OCI-LY7 (cell line): ENCODE measurements at regions of chr12 and their contacts with region 1.

Region 1: GRCh38 chr12:53352331-53353256 is 16.4 kb upstream of the SP7 start:
- DNase-seq: peak; percentile 88
- H3K4me3 ChIP-seq: no peak overlapping the region
- H3K27ac ChIP-seq: no peak overlapping the region
- H3K4me1 ChIP-seq: no peaks in the 10 kb centered on the region
- CTCF ChIP-seq: peak; percentile 93

Region 2: DNA sequence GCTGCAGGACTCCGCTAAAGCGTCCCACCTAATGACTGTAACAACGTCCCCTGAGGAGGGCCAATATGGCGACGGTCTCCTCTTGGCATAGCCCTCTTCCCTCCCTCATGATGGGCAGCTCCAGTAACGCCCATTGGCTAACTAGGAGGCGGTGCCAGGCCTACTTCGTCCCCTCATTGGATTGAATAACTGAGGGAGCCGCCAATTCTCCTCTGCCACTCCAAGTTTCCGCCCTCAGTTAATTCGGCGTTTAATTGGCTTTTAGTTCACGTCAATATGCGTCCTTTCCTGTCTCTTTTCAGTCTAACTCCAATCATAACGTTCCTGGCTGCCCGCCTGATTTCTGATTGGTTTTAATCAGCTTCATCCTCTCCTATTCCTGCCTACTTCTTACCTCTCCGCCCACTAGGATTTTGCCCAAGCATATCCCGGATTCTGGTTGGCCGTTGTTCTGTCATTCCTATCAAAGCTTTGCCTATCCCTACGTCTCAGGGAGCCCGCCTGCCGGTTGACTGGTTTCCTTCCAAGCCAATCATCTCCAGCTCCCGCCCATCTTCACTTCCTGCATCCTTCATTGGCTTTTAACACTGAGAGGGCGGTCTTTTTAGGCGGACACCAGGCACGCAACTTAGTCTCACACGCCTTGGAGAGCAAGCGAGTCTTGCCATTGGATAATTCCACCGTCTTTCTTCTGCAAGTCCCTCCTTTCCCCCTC is 27.0 kb after region 1 on chr12:
- CTCF ChIA-PET with region 1: interaction called, 7 read pairs
- POLR2A ChIA-PET with region 1: interaction called, 9 read pairs
- intact Hi-C with region 1: loop called (anchors 1 kb)
- DNase-seq: peak; percentile 100
- H3K4me3 ChIP-seq: peak overlapping the region; percentile 86
- H3K27ac ChIP-seq: peak overlapping the region; percentile 77
- H3K4me1 ChIP-seq: peaks cover 45% of the 10 kb centered on the region
- CTCF ChIP-seq: no peak

Region 3: DNA sequence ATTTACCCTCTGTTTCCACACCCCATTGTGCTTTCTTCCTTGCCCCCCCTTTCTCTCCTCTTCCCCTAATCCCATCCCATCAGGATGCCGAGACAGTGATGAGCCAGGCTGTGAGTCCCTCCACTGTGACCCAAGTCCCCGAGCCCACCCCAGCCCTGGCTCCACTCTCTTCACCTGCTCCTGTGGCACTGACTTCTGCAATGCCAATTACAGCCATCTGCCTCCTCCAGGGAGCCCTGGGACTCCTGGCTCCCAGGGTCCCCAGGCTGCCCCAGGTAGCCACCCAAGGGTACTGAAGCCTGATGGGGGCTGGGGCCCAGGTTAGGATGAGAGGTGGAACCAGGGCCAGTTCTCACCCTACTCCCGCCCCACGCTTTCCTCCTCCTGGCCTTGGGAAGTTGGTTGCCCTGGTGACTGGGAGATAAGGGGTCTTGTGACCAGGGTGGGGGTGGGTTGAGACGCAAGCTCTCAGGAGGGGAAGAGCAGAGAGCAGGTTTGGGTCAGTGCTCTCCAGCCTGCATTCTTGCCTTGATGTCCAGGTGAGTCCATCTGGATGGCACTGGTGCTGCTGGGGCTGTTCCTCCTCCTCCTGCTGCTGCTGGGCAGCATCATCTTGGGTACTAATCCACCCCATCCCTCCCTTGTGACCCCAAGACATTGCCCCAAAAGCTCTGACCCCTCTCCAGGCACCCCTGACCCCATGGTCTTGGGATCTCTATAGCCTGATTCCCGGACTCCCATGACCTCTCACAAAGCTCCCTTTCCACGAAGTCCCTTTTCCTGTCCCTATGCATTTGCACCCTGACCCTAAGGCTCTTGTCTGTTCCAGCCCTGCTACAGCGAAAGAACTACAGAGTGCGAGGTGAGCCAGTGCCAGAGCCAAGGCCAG is 72.3 kb after region 1 on chr12:
- CTCF ChIA-PET with region 1: interaction called, 11 read pairs
- POLR2A ChIA-PET with region 1: interaction called, 7 read pairs
- intact Hi-C with region 1: loop called (anchors 1 kb)
- DNase-seq: no peak
- H3K4me3 ChIP-seq: no peak overlapping the region
- H3K27ac ChIP-seq: no peak overlapping the region
- H3K4me1 ChIP-seq: peaks cover 4% of the 10 kb centered on the region
- CTCF ChIP-seq: no peak

Region 4: GRCh38 chr12:53465679-53466078 is 113.1 kb after region 1 on chr12:
- CTCF ChIA-PET with region 1: no interaction called
- POLR2A ChIA-PET with region 1: no interaction called
- intact Hi-C with region 1: no loop called
- DNase-seq: no peak
- H3K4me3 ChIP-seq: no peak overlapping the region
- H3K27ac ChIP-seq: no peak overlapping the region
- H3K4me1 ChIP-seq: peaks cover 24% of the 10 kb centered on the region
- CTCF ChIP-seq: 0 out of 2 replicates have a peak, but pooled peaks have one; percentile 24

Region 5: DNA sequence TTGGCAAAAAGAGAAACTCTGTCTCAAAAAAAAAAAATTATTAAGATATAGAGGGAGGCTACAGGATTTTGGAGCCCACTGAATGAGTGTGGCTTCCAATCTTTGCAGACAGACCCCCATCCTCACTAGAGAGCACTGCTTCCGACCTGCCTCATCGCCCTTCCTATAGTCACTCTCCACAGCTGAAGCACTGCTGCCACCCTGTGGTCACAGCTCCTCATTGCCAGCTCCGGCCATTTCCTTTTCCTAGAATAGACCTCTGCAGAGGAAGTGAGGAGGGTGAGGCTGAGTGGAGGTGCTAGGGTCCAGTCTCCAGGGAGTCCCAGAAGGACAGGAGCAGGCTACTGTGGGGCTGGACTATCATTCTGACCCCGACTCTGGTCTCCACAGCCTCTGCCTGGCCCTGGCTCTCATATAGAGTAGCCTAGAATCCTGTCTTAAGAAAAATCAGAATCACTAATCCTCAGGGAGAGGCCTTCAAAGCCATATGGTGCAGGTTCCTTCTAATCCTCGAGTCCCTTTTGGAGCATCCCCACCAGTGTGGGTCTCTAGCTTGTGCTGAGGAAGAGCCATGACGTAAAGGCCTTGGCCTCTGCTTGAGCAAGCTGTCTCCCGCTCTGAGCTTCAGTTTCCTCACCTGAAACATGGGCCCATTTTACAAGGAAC is 156.1 kb after region 1 on chr12:
- CTCF ChIA-PET with region 1: interaction called, 7 read pairs
- POLR2A ChIA-PET with region 1: no interaction called
- intact Hi-C with region 1: loop called (anchors 1 kb)
- DNase-seq: peak; percentile 88
- H3K4me3 ChIP-seq: no peak overlapping the region
- H3K27ac ChIP-seq: no peak overlapping the region
- H3K4me1 ChIP-seq: peaks cover 7% of the 10 kb centered on the region
- CTCF ChIP-seq: peak; percentile 92

Region 6: GRCh38 chr12:53561590-53561953 is 209.0 kb after region 1 on chr12:
- CTCF ChIA-PET with region 1: no interaction called
- POLR2A ChIA-PET with region 1: no interaction called
- intact Hi-C with region 1: no loop called
- DNase-seq: no peak
- H3K4me3 ChIP-seq: no peak overlapping the region
- H3K27ac ChIP-seq: no peak overlapping the region
- H3K4me1 ChIP-seq: no peaks in the 10 kb centered on the region
- CTCF ChIP-seq: no peak